Activated naive CD4-positive, alpha-beta T cell treated with anti-CD3 and anti-CD28 coated beads for 36 hours (primary cell): ENCODE measurements at regions of chr1 and their contacts with region 1.

Region 1: GRCh38 chr1:62144238-62144831 is 50.3 kb upstream of the L1TD1 start:
- DNase-seq: peak; percentile 67
- H3K4me3 Mint-ChIP-seq: no peak overlapping the region
- H3K27ac Mint-ChIP-seq: no peak overlapping the region
- H3K4me1 Mint-ChIP-seq: no peaks in the 10 kb centered on the region
- H3K27me3 Mint-ChIP-seq: no peaks in the 10 kb centered on the region

Region 2: GRCh38 chr1:62082456-62083363 is 61.6 kb before region 1 on chr1:
- CTCF ChIA-PET with region 1: interaction called, 10 read pairs
- intact Hi-C with region 1: loop called (anchors 1 kb)
- DNase-seq: peak; percentile 62
- H3K4me3 Mint-ChIP-seq: no peak overlapping the region
- H3K27ac Mint-ChIP-seq: no peak overlapping the region
- H3K4me1 Mint-ChIP-seq: no peaks in the 10 kb centered on the region
- H3K27me3 Mint-ChIP-seq: no peaks in the 10 kb centered on the region